Dendritic cell treated with granulocyte-macrophage colony-stimulating factor and Interleukin-4, amounts not matched to agents 40 ng/mL and 50 ng/mL, for 4 days (primary cell): ENCODE measurements at regions of chr7 and their contacts with region 1.

Region 1: GRCh38 chr7:322111-322671 is 32.2 kb downstream of the FOXL3 start:
- H3K4me3 Mint-ChIP-seq: no peak overlapping the region
- H3K27ac Mint-ChIP-seq: no peak overlapping the region
- H3K4me1 Mint-ChIP-seq: peaks cover 7% of the 10 kb centered on the region
- H3K27me3 Mint-ChIP-seq: peaks cover 35% of the 10 kb centered on the region

Region 2: DNA sequence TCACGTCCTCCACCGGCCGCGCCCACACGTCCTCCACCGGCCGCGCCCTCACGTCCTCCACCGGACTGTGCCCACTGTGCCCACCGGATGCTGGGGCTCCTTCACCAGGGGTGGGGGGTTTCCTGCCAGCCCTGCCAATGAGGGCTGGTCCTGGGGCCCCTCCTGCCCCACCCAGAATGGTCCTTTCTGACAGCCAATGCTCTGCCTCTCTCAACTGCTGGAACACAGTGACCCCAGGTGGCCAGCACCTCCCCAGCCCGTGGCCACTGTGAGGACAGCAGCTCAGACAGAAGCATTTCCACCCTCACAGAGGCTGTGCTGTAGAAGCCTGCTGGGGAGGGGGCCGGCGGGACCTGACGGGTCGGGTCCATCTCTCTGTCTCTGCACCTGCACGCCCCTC is 314.2 kb after region 1 on chr7:
- intact Hi-C with region 1: loop called (anchors 5 kb)
- H3K4me3 Mint-ChIP-seq: no peak overlapping the region
- H3K27ac Mint-ChIP-seq: peak overlapping the region; percentile 70
- H3K4me1 Mint-ChIP-seq: peaks cover 5% of the 10 kb centered on the region
- H3K27me3 Mint-ChIP-seq: no peaks in the 10 kb centered on the region

Region 3: DNA sequence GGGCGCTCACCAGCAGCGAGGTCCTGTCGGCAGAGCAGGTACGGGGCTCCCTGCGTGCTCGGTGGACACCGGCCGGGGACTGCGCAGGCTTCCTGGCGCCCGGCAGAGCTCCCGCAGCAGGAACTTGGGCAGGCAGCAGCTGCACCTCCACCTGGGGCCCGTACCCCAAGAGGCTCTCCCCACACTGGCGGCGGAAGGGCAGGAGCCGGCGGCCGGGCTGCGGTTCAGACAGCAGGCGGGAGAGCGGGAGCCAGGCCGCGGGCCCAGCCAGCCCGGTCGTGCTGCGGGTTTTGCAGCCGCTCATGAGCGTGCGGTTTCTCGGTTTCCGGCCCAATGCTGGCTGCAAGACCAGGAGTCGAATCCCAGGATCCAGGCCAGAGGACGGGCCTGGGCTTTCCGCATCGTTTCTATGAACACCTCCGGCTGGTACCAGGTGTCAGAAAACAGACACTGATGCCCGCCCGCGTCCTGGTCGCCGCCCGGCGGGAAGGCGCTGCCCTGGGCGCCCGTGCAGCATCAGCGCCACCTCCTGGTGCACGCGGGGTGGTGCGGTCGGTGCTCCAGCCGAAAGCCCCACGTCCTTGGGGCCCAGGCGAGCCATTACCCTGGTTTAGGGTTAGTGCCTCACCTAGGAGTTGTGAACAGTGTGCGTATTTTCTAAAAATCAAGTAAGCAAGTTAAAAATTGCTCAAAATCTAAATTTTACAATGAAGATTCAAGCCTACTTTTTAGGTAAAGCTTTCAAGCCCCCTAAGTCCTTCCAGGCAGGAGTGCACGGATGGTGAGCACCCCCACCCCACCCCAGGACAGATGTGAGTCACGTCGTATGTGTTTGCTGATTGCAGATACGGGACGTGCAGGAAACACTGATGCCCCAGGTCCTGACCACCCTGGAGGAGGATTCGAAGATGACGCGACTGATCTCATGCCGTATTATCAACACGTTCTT is 452.2 kb after region 1 on chr7:
- intact Hi-C with region 1: loop called (anchors 2 kb)
- H3K4me3 Mint-ChIP-seq: no peak overlapping the region
- H3K27ac Mint-ChIP-seq: no peak overlapping the region
- H3K4me1 Mint-ChIP-seq: no peaks in the 10 kb centered on the region
- H3K27me3 Mint-ChIP-seq: no peaks in the 10 kb centered on the region

Region 4: GRCh38 chr7:786472-787255 is 464.5 kb after region 1 on chr7:
- intact Hi-C with region 1: no loop called
- H3K4me3 Mint-ChIP-seq: no peak overlapping the region
- H3K27ac Mint-ChIP-seq: no peak overlapping the region
- H3K4me1 Mint-ChIP-seq: no peaks in the 10 kb centered on the region
- H3K27me3 Mint-ChIP-seq: no peaks in the 10 kb centered on the region